ENCODE measurements at regions of chr11 and their contacts with region 1.

Region 1: DNA sequence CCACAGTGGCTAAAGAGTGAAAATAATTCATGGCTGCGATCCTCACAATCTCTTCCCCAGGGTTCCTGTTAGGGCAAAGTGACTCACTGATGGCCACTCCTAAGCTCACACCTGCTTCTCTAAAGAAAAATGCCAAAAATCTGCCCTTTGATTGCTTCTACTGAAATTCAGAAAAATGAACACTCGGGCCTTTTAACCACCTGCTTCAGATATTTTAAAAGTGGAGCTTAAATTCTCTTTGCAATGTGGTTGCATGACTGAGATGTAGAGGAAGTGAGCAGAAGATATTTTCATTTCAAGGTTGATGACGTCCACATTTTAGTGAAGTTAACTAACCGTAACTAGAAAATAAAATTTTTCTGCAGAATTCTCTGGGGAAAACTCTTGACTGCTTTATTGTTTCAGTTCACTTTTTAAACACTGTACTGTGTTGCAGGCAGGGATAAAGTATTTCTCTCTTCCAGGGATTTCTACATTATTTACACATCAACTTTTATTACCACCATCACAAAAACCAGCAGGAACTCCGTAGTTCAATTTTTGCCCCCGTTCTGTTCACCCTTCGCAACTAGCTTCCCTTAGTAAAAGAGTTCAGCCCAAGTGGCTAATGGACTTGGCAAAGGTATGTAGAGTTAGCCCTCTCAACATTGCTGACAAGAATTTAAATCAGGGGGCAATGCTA is 8.5 kb downstream of the RAB30 start:
- DNase-seq: peak; percentile 88
- ATAC-seq: peak; percentile 77
- H3K4me3 ChIP-seq: peak overlapping the region; percentile 66
- H3K27ac ChIP-seq: peak overlapping the region; percentile 96
- H3K4me1 ChIP-seq: peaks cover 43% of the 10 kb centered on the region
- H3K27me3 ChIP-seq: no peaks in the 10 kb centered on the region
- CTCF ChIP-seq: no peak
- EP300 ChIP-seq: peak; percentile 96 to 98
- POLR2A ChIP-seq: no peak
- RAD21 ChIP-seq: no peak

Region 2: GRCh38 chr11:82750643-82751139 is 312.5 kb before region 1 on chr11:
- CTCF ChIA-PET with region 1: no interaction called
- POLR2A ChIA-PET with region 1: no interaction called
- RAD21 ChIA-PET with region 1: no interaction called
- SMC1A ChIA-PET with region 1: no interaction called
- in situ Hi-C with region 1: no loop called
- intact Hi-C with region 1: no loop called
- DNase-seq: no peak
- ATAC-seq: no peak; the same call in 1 of the 3 replicates
- H3K4me3 ChIP-seq: no peak overlapping the region
- H3K27ac ChIP-seq: no peak overlapping the region
- H3K4me1 ChIP-seq: no peaks in the 10 kb centered on the region
- H3K27me3 ChIP-seq: 0 out of 4 replicates have a peak, but pooled peaks cover 0 to 2% of the 10 kb centered on the region in 2 experiments
- CTCF ChIP-seq: no peak
- EP300 ChIP-seq: no peak
- POLR2A ChIP-seq: no peak
- RAD21 ChIP-seq: no peak

Region 3: DNA sequence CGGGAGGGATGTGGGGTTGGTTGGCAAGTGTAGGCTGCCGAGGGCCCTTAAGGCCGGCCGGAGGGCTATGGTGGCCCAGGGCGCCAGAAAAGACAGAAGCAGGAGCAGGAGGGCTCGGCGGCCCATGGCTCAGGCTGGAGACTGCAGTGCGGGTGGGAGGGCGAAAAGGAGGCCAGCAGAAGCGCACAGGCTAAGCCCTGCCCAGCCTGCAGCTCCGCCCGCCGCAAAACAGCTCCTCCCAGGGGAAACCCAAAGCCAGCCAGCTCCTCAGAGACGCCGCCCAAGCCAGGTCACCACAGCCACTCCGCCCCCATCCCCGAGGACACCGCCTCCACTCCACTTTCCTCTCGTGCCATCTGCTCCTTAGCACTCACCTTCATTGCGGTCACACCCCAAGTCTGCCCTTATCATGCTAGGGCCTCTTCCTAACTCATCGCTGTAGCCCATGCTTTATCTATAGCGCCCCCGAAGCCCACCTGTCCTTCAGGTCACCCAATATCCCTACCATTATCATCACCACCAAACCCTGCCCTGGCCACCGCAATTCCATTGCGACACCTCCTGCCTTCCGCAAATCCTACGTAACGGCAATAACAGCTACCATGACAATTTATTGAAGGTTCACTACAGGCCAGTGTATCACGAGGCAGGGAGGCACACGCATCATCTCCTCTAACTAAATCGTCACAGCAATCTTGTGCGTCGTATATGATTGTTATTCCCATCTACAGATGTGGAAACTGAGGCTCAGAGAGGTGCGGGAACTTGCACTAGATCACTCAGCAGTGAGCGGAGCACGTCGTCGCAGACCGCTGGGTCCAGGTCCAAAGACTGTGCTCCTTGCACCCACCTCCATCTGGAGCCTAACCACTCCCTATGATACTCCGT is 162.7 kb before region 1 on chr11 and contains the start of gene PRCP:
- CTCF ChIA-PET with region 1: interaction called, 5 read pairs
- POLR2A ChIA-PET with region 1: interaction called, 8 read pairs
- RAD21 ChIA-PET with region 1: interaction called, 20 read pairs
- SMC1A ChIA-PET with region 1: interaction called, 4 read pairs
- in situ Hi-C with region 1: no loop called
- intact Hi-C with region 1: no loop called
- DNase-seq: peak; percentile 84
- ATAC-seq: peak; percentile 88
- H3K4me3 ChIP-seq: peak within 1 kb of the TSS; percentile 82
- H3K27ac ChIP-seq: peak within 1 kb of the TSS; percentile 84
- H3K4me1 ChIP-seq: peaks cover 15% of the 10 kb centered on the region
- H3K27me3 ChIP-seq: no peaks in the 10 kb centered on the region
- CTCF ChIP-seq: no peak
- EP300 ChIP-seq: 0 out of 4 replicates have a peak, but pooled peaks of 1 of the 2 experiments have one; percentile 12
- POLR2A ChIP-seq: peak; percentile 84
- RAD21 ChIP-seq: no peak
- polyA plus RNA-seq, gene PRCP: 21.5 to 25.3 TPM

Region 4: GRCh38 chr11:82959987-82960778 is 103.0 kb before region 1 on chr11:
- CTCF ChIA-PET with region 1: interaction called, 3 read pairs
- POLR2A ChIA-PET with region 1: interaction called, 5 read pairs
- RAD21 ChIA-PET with region 1: interaction called, 6 read pairs
- SMC1A ChIA-PET with region 1: interaction called, 29 read pairs
- in situ Hi-C with region 1: no loop called
- intact Hi-C with region 1: no loop called
- DNase-seq: peak; percentile 65
- ATAC-seq: peak; percentile 93
- H3K4me3 ChIP-seq: peak overlapping the region; percentile 3; the same call in 1 of the 2 replicates
- H3K27ac ChIP-seq: peak overlapping the region; percentile 72
- H3K4me1 ChIP-seq: peaks cover 17% of the 10 kb centered on the region
- H3K27me3 ChIP-seq: no peaks in the 10 kb centered on the region
- CTCF ChIP-seq: no peak
- EP300 ChIP-seq: peak in 1 of 2 experiments; percentile 87; a peak in 2 of 4 replicates
- POLR2A ChIP-seq: no peak
- RAD21 ChIP-seq: no peak

Region 5: GRCh38 chr11:83007909-83008580 is 55.2 kb before region 1 on chr11:
- CTCF ChIA-PET with region 1: interaction called, 5 read pairs
- POLR2A ChIA-PET with region 1: interaction called, 24 read pairs
- RAD21 ChIA-PET with region 1: interaction called, 33 read pairs
- SMC1A ChIA-PET with region 1: interaction called, 46 read pairs
- in situ Hi-C with region 1: no loop called
- intact Hi-C with region 1: loop called (anchors 2 kb)
- DNase-seq: no peak
- ATAC-seq: peak; percentile 73
- H3K4me3 ChIP-seq: peak overlapping the region; percentile 24; the same call in 1 of the 2 replicates
- H3K27ac ChIP-seq: peak overlapping the region; percentile 67
- H3K4me1 ChIP-seq: peaks cover 26% of the 10 kb centered on the region
- H3K27me3 ChIP-seq: no peaks in the 10 kb centered on the region
- CTCF ChIP-seq: peak in 1 of 3 experiments; percentile 10; a peak in 1 of 6 replicates
- EP300 ChIP-seq: no peak
- POLR2A ChIP-seq: no peak
- RAD21 ChIP-seq: no peak

Region 6: GRCh38 chr11:83044958-83045712 is 18.1 kb before region 1 on chr11:
- CTCF ChIA-PET with region 1: interaction called, 5 read pairs
- POLR2A ChIA-PET with region 1: interaction called, 21 read pairs
- RAD21 ChIA-PET with region 1: interaction called, 11 read pairs
- SMC1A ChIA-PET with region 1: interaction called, 29 read pairs
- in situ Hi-C with region 1: no loop called
- intact Hi-C with region 1: no loop called
- DNase-seq: no peak
- ATAC-seq: peak; percentile 85
- H3K4me3 ChIP-seq: no peak overlapping the region
- H3K27ac ChIP-seq: no peak overlapping the region
- H3K4me1 ChIP-seq: peaks cover 8% of the 10 kb centered on the region
- H3K27me3 ChIP-seq: no peaks in the 10 kb centered on the region
- CTCF ChIP-seq: no peak
- EP300 ChIP-seq: no peak
- POLR2A ChIP-seq: no peak
- RAD21 ChIP-seq: no peak

Region 7: GRCh38 chr11:83156150-83156995 is 93.2 kb after region 1 on chr11:
- CTCF ChIA-PET with region 1: interaction called, 6 read pairs
- POLR2A ChIA-PET with region 1: interaction called, 42 read pairs
- RAD21 ChIA-PET with region 1: interaction called, 7 read pairs
- SMC1A ChIA-PET with region 1: interaction called, 14 read pairs
- in situ Hi-C with region 1: no loop called
- intact Hi-C with region 1: no loop called
- DNase-seq: peak; percentile 100
- ATAC-seq: peak; percentile 89
- H3K4me3 ChIP-seq: peak overlapping the region; percentile 80
- H3K27ac ChIP-seq: peak overlapping the region; percentile 85
- H3K4me1 ChIP-seq: peaks cover 3% of the 10 kb centered on the region; the same call in 1 of the 2 replicates
- H3K27me3 ChIP-seq: no peaks in the 10 kb centered on the region
- CTCF ChIP-seq: no peak
- EP300 ChIP-seq: no peak; a peak in 1 of 4 replicates
- POLR2A ChIP-seq: no peak
- RAD21 ChIP-seq: no peak